Heart left ventricle (tissue), 16 donors: ENCODE measurements at regions of chr2 and their contacts with region 1.

Region 1: DNA sequence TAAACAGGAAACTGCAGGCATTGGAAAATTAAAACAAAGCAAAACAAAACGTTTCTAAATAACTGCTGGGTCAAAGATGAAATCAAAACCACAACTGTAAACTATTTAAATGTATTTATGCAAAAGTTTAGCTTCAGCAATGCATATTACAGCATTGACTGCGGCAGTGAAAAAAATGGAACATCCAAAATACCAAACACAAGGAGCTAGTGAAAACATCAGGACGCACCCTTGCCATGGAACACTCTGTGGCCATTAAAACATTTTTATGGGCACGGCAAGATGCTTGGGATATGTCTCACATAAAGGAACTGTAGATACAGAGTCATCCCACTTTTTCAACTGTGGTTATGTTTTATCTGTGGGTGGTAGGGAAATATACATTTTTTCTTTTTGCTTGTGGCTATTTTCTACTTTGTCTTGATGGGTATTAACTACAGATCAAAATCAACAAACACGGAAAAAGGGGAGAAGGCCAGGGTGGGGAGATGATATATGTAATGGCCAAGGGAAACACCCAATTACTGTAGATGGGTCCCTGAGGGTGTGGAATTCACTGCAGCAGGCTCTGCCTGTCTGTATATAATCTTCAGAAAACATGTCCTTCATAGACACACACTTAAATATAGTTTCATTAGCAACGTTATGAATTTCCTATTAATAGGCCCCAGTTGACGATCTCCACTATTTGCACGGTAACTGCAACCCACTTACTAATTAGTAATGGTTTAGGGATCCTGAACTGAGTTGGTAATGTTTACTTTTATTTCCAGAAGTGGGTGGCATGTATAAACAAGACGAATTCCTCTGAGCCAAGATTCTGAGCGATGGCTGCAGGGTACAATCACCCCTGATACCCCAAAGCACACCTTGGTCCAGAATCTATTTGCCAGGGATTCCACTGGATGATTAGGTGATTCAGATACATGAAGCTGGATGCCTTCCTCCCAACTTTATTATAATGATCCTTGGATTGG is 110.5 kb downstream of the ACKR3 start:
- DNase-seq: peak in 1 of 5 donors; percentile 1
- ATAC-seq: no peak
- H3K4me3 ChIP-seq: no peak overlapping the region
- H3K27ac ChIP-seq: no peak overlapping the region
- H3K4me1 ChIP-seq: peaks cover 0 to 34% (median 15%) of the 10 kb centered on the region in 12 donors
- H3K27me3 ChIP-seq: no peaks in the 10 kb centered on the region
- CTCF ChIP-seq: no peak
- POLR2A ChIP-seq: no peak

Region 2: GRCh38 chr2:236168110-236169067 is 511.8 kb before region 1 on chr2 and contains the start of gene GBX2:
- intact Hi-C with region 1: no loop called
- DNase-seq: peak in 1 of 5 donors; percentile 29
- ATAC-seq: peak; percentile 18 to 65 (median 35)
- H3K4me3 ChIP-seq: peak within 1 kb of the TSS; percentile 16 to 49 (median 40)
- H3K27ac ChIP-seq: no peak within 1 kb of the TSS
- H3K4me1 ChIP-seq: peaks cover 18 to 79% (median 46%) of the 10 kb centered on the region in 12 donors
- H3K27me3 ChIP-seq: peaks cover 86 to 100% (median 99%) of the 10 kb centered on the region in 9 donors
- CTCF ChIP-seq: no peak
- POLR2A ChIP-seq: no peak
- total RNA-seq, gene GBX2: 0.17 TPM in 1 of 9 donors, not detected in the others

Region 3: DNA sequence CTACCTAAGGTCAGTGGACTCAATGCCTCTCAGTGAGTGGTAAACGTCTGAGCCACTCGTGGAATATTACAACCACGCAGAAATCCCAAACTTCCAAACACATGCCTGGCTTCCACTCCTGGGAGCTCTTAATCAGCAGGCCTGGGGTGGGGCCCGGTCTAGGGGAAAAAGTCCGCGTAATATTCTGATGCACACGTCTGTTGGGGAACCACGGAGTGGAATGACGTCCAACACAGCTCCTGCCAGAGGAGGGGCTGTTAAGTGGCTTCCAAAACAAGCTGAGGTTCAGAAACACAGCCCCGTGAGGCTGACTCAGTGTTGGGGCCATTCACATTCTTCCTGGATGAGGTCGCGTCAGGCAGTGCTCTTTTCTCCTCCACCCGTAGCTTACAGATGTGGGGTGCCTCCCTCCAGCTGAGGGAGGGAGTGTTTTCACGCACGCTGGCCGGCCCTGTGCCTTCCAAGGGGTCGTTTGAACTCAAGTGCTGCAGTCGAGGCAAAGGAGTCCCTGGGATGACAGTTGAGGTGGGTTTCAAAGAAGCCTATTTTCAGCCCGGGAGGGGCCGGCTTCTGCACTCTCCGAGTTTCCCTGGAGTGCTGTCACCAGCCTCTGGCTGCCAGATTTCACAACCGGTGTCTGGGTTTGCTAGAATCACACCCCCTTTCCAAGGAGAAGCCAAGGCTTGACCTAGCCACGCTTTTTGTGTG is 37.4 kb before region 1 on chr2:
- intact Hi-C with region 1: no loop called
- DNase-seq: peak; percentile 82 to 94 (median 83)
- ATAC-seq: peak; percentile 78 to 96 (median 94)
- H3K4me3 ChIP-seq: no peak overlapping the region
- H3K27ac ChIP-seq: peak overlapping the region; percentile 11 to 86 (median 72)
- H3K4me1 ChIP-seq: peaks cover 0 to 25% (median 7%) of the 10 kb centered on the region in 12 donors
- H3K27me3 ChIP-seq: no peaks in the 10 kb centered on the region
- CTCF ChIP-seq: peak in 1 of 12 donors; percentile 7
- POLR2A ChIP-seq: no peak

Region 4: DNA sequence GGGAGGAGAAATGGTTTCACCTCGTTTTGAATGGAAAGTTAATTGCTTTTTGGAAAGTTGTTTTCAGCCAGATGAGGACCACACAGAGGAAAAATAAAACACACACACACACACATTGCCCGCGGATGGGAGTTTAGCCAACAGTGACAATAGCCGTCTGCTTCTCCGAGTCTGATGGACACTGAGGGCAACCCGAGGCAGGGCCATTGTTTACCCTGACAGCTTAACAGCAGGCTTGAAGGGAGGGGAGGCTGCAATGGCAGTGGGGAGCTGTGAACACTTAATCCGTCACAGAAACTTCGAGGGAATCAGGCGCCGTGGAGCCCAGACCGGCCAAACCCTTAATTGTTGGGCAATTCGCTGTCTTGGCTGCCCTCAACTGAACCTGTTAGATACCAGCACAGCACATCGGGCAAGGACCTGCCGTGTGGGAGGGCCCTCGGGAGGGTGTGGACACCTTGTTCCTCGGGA is 35.4 kb after region 1 on chr2:
- intact Hi-C with region 1: loop called in 1 of 10 experiments (anchors 5 kb)
- DNase-seq: no peak
- ATAC-seq: no peak
- H3K4me3 ChIP-seq: no peak overlapping the region
- H3K27ac ChIP-seq: no peak overlapping the region
- H3K4me1 ChIP-seq: peaks cover 0 to 43% (median 6%) of the 10 kb centered on the region in 12 donors
- H3K27me3 ChIP-seq: peaks cover 0 to 3% (median 0%) of the 10 kb centered on the region in 9 donors
- CTCF ChIP-seq: no peak
- POLR2A ChIP-seq: no peak